Tibial artery (tissue), 4 donors: ENCODE measurements at regions of chr18 and their contacts with region 1.

Region 1: DNA sequence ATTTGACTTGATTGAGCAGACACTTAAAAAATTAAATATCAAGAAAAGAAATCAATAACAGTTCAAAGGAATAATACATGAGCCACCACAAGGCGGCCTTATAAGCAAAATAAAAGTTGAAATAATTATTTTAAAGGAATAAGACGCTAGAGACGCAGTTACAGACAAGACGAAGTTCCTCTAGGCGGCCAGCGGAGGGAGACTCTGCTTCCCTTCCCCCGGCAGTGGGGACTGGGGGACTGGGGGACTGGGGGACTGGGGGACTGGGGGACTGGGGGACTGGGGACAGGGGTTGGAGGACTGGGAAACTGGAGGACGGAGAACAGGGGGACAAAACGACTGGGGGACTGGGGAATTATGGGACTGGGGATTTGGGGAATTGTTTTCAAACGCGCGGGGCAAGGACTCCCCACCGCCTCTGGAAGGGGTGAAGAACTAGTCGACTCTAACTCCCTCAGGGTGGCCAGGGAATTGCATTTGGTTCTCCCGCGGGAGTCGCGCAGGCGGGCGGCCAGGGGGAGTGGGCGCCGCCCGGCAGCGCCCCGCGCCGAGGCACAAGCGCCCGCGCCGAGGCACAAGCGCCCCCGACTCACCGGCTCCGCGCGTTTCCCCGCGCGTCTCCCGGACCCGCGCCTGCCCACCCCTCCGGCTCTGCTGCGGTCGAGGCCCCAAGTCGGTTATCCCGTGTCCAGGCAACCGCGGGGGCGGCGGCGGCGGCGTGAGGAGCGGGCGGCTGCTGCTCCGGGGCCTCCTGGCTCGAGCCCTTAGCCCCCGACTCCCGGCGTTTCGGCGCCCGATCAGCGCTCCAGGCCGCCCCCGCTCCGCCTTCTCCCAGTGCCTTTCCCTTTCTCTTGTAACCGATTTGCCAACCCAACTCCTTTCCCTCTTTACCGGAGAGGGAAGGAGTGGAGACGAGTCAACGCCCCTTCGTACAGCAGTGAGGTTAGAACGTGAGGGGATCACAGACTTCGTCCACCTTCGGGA is at the start of gene CCDC178:
- DNase-seq: peak in 1 of 2 donors; percentile 22
- H3K4me3 ChIP-seq: peak within 1 kb of the TSS; percentile 56 to 74
- H3K27ac ChIP-seq: peak within 1 kb of the TSS; percentile 54 to 64
- H3K4me1 ChIP-seq: peaks cover 0 to 5% (median 1%) of the 10 kb centered on the region in 4 donors
- H3K27me3 ChIP-seq: peaks cover 0 to 3% of the 10 kb centered on the region in 2 donors
- CTCF ChIP-seq: peak; percentile 8 to 35

Region 2: DNA sequence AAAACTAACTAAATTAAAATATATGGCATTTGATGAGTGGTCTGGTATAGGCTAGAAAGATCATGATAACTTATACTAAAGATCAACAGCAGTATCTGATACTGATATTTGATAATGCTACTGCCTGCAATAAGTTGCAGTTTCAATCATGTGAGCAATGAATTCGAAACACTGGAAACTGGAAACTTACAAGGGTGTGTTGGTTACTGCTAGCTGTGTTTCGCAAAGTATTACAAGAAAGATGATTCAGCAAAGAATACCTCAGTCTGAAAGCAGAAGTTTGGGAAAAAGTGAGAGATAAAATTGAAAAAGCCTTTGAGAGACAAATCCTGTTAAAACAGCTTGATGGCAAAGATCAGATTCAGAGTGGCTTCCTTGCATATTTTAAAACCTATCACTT is 294.3 kb before region 1 on chr18:
- intact Hi-C with region 1: no loop called
- DNase-seq: no peak
- H3K4me3 ChIP-seq: no peak overlapping the region
- H3K27ac ChIP-seq: no peak overlapping the region
- H3K4me1 ChIP-seq: no peaks in the 10 kb centered on the region
- H3K27me3 ChIP-seq: no peaks in the 10 kb centered on the region
- CTCF ChIP-seq: no peak

Region 3: GRCh38 chr18:33611525-33612135 is 171.3 kb after region 1 on chr18:
- intact Hi-C with region 1: no loop called
- DNase-seq: no peak
- H3K4me3 ChIP-seq: no peak overlapping the region
- H3K27ac ChIP-seq: no peak overlapping the region
- H3K4me1 ChIP-seq: no peaks in the 10 kb centered on the region
- H3K27me3 ChIP-seq: no peaks in the 10 kb centered on the region
- CTCF ChIP-seq: no peak

Region 4: DNA sequence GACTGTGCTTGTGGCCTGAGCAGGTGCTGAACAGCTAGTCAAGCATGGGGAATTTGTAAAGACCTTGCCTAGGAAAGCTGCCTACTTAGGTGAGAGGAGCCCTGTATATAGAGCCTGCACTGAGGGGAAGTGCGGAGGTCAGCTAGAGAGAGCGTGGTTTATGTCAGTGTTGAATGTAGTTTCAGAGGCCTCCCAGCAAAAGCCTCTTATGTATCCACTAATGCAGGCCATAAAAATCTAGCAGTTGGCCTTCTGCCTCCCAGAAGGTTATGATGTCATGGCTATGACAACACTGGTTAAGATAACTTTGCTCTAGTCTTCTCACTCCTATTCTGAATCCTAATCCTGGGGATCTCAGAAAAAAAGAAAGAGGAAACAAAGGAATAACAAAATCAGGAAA is 226.6 kb after region 1 on chr18:
- intact Hi-C with region 1: loop called (anchors 10 kb)
- DNase-seq: no peak
- H3K4me3 ChIP-seq: no peak overlapping the region
- H3K27ac ChIP-seq: no peak overlapping the region
- H3K4me1 ChIP-seq: no peaks in the 10 kb centered on the region
- H3K27me3 ChIP-seq: no peaks in the 10 kb centered on the region
- CTCF ChIP-seq: no peak